Sigmoid colon (tissue), 7 donors: ENCODE measurements at regions of chr12 and their contacts with region 1.

Region 1: DNA sequence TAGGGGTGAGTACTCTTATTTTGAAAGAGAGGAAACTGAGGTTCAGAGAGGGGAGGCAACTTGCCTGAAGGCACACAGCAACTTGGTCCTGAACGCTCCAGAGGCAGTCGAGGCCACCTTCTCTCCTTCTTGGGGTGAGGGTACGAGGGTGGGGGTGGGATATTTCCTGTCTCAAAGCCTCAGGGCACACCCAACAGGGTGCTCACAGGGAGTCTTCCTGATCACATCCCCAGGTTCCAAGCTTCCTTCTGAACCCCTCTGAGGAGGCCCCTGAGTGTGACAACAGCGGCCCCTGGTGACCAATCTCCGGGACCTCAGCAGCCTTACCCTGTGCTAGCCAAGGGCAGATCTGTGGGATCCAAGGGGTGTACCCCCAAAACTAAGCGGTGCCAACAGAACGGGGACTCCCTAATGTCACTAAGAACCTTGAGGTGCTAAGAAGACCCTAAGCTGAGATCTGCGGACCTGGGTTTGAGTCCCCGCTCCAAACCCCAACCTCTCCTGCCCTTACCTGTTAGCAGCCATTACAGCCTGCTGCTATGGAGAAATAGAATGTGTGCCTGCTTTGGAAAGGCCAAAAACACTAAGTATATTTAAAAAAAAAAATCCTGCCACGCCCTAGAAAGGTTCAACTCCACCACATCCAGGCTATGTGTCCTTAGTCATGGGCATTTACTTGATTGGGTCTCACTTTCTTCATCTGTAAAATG is 57.9 kb downstream of the TRPV4 start:
- DNase-seq: peak; percentile 87
- H3K4me3 ChIP-seq: no peak overlapping the region
- H3K27ac ChIP-seq: no peak overlapping the region
- H3K4me1 ChIP-seq: peaks cover 0 to 14% (median 11%) of the 10 kb centered on the region in 4 donors
- H3K27me3 ChIP-seq: no peaks in the 10 kb centered on the region
- CTCF ChIP-seq: peak; percentile 75 to 89 (median 86)
- EP300 ChIP-seq: no peak
- POLR2A ChIP-seq: no peak

Region 2: GRCh38 chr12:109518820-109519665 is 256.3 kb before region 1 on chr12:
- intact Hi-C with region 1: loop called (anchors 2 kb)
- DNase-seq: peak; percentile 64
- H3K4me3 ChIP-seq: no peak overlapping the region
- H3K27ac ChIP-seq: peak overlapping the region in 3 of 4 donors; percentile 36 to 51 (median 38)
- H3K4me1 ChIP-seq: peaks cover 0 to 4% (median 0%) of the 10 kb centered on the region in 4 donors
- H3K27me3 ChIP-seq: no peaks in the 10 kb centered on the region
- CTCF ChIP-seq: peak; percentile 34 to 80 (median 58)
- EP300 ChIP-seq: no peak
- POLR2A ChIP-seq: no peak

Region 3: GRCh38 chr12:109597795-109598427 is 177.4 kb before region 1 on chr12:
- intact Hi-C with region 1: loop called (anchors 1 kb)
- DNase-seq: peak; percentile 94
- H3K4me3 ChIP-seq: no peak overlapping the region
- H3K27ac ChIP-seq: no peak overlapping the region
- H3K4me1 ChIP-seq: peaks cover 0 to 12% (median 8%) of the 10 kb centered on the region in 4 donors
- H3K27me3 ChIP-seq: no peaks in the 10 kb centered on the region
- CTCF ChIP-seq: peak; percentile 86 to 97 (median 96)
- EP300 ChIP-seq: no peak
- POLR2A ChIP-seq: no peak